ENCODE measurements at regions of chr11 and their contacts with region 1.

Region 1: GRCh38 chr11:11787305-11788062 is 54.3 kb upstream of the USP47 start:
- DNase-seq: peak; percentile 78
- H3K4me3 ChIP-seq: no peak overlapping the region
- H3K27ac ChIP-seq: no peak overlapping the region
- H3K4me1 ChIP-seq: no peaks in the 10 kb centered on the region
- H3K27me3 ChIP-seq: peaks cover 6% of the 10 kb centered on the region

Region 2: DNA sequence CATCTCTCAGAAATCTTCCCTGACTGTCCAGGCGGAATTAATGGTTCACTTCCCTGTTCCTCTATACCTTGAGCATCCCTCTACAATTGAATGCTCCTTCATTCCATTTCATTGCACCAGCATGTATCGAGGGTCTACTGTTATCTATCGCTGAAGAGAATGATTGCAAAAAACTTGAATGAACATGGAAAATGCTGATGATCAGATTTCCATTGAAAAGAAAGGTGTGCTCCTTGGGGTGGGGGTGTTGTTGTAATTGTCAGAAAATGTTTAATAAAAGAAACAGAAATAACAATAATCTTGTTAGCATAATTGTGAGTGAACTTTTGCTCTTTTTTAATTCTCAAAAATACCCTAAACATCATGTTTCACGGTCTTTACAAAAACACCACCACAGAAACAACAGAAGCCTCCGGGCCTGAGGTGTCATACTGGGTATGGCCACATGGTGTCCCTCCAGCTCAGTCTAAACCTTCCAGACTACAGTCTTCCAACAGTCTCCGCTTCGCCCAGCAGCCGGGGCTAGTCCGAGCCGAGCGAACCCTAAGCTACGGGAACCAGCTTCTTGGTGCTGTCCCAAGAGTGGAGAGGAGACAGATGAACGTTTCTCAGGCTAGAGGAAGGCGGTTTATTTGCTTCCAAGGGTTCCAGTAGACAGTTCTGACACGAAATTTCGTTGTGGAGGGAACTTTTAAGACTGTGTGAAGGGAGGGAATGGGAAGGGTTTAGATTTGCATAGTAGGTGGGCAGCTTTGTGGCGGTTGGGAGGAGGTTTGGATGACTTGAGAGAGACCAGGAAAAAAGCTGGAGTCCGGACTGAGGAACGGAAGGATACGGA is 853.8 kb before region 1 on chr11:
- in situ Hi-C with region 1: loop called (anchors 10 kb)
- DNase-seq: peak; percentile 98
- H3K4me3 ChIP-seq: peak overlapping the region; percentile 80
- H3K27ac ChIP-seq: peak overlapping the region; percentile 49
- H3K4me1 ChIP-seq: 0 out of 2 replicates have a peak, but pooled peaks cover 3% of the 10 kb centered on the region
- H3K27me3 ChIP-seq: no peaks in the 10 kb centered on the region

Region 3: GRCh38 chr11:11044137-11044855 is 743.2 kb before region 1 on chr11:
- in situ Hi-C with region 1: loop called (anchors 10 kb)
- DNase-seq: peak; percentile 25
- H3K4me3 ChIP-seq: no peak overlapping the region
- H3K27ac ChIP-seq: no peak overlapping the region
- H3K4me1 ChIP-seq: peaks cover 3% of the 10 kb centered on the region; the same call in 1 of the 2 replicates
- H3K27me3 ChIP-seq: 0 out of 2 replicates have a peak, but pooled peaks cover 3% of the 10 kb centered on the region

Measured in GM23248 (cell line).